ENCODE measurements at regions of chr3 and their contacts with region 1.

Region 1: DNA sequence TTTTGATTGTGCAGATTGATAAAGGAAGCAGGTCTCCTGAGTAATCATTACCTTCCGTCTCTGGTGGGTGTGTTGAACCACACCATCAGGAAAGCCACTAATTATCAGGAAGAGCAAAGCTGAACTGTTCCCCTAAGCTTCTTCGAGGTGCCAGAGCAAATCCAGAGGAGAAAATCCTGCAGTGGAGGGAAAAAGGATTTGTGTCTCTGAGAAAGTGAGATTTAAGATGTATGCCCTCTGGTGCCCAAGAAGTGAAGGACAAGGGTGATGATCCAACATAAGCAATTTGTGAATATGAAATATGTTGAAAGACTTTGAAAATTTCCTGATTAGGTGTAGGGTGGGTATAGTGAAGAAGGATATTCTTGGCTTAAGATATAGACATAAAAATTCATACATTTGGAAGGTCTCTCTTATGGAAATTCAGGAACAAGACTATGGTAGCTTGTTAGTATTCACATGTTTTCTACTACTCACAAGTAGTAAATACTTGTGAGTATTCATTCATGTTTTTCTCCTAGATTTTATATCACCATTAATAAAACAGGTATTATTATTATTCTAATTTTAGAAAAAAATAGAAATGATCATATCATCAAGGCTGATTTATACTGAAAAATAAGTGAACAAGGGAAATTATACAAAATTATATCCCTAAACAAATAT is 34.8 kb downstream of the COMMD2 start:
- DNase-seq: peak; percentile 53
- H3K27ac ChIP-seq: no peak overlapping the region
- CTCF ChIP-seq: peak; percentile 80

Region 2: DNA sequence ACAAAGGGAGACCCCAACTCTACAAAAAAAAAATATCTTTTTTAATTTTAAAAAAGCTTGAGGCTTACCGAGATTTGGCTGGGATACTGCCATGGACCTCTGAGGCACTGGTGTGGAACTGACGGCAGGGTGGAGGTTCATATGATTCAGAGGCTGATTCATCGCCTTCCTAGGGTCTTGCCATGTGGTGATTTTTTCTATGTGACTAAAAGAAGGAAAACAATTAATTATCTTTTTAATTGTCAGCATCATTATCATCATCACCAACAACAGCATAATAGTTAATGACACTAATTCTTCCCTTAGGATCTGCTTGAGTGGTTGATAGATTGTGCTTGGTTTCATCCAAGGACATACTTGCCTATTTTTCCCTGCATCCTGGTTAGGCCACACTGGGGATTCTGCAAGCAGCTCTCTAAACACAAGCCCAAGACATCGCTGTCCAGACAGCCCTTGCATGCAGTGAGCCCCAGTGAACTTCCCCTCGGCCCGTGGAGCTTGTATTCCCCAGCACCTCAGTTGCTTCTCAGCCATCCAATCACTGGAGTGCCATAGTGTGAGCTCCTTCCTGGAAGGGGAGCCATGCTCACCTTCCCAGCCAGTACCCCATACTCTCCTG is 144.6 kb before region 1 on chr3:
- CTCF ChIA-PET with region 1: interaction called, 14 read pairs
- POLR2A ChIA-PET with region 1: no interaction called
- DNase-seq: peak; percentile 60
- H3K27ac ChIP-seq: peak overlapping the region; percentile 75
- CTCF ChIP-seq: no peak